ENCODE measurements at regions of chr3 and their contacts with region 1.

Region 1: DNA sequence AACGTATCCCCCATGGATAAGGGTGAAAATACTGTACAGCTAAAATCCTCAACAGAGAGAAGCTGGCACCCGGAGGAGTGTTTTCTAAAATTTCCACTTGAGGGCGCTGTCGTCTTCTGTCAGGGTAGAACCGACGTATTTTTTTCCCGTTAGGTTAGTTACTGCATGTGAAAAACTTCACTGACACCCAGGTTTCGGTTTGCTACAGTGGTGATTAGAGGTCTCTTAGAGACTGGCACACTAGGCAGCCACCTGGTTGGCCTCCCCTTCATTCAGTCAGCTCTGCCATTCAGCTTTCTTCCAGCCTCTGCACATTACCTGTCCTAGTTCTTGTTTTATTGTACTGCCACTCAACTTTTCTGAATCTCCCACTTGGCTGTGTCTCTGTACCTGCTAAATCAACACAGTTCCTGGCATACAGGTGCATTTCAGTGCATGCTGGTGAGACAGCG is 18.4 kb downstream of the CCK start:
- DNase-seq: peak; percentile 56
- CTCF ChIP-seq: peak; percentile 63

Region 2: DNA sequence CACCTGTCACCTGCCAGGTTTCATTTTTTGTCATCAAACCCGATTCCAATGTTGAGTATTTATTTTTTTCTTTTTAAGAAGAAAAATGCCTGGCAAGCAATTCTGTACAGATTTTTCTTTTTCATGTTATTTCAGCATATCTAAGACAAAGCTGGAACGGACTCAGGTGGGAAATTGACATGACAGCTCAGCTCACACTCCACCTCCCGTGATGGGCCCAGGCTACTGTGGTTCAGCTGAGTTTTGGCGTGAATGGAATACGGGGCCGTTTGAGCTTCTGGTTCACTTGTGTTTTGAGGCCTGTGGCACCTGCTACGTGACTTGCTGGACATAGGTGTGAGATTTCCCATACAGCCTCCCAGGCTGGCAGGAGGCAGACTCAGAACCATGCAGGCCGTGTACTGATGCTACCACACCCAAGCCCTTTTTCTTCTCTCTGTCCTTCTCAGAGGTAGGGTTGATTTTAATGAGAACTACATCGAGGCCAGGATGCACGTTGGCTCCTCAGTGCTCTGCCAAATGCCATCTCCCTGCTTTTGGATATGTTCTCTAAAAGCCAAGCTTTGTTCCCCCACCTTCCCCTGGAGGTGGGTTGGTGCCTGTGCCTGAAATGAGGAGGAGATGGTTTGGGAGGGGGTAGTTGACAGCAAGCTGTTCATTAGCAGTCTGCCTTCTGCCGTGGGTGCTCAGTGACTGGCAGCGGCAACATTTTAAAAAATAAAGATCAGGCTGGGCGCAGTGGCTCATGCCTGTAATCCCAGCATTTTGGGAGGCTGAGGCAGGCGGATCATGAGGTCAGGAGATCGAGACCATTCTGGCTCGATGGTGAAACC is 107.8 kb before region 1 on chr3:
- CTCF ChIA-PET with region 1: no interaction called
- POLR2A ChIA-PET with region 1: no interaction called
- DNase-seq: no peak
- CTCF ChIP-seq: no peak

Region 3: DNA sequence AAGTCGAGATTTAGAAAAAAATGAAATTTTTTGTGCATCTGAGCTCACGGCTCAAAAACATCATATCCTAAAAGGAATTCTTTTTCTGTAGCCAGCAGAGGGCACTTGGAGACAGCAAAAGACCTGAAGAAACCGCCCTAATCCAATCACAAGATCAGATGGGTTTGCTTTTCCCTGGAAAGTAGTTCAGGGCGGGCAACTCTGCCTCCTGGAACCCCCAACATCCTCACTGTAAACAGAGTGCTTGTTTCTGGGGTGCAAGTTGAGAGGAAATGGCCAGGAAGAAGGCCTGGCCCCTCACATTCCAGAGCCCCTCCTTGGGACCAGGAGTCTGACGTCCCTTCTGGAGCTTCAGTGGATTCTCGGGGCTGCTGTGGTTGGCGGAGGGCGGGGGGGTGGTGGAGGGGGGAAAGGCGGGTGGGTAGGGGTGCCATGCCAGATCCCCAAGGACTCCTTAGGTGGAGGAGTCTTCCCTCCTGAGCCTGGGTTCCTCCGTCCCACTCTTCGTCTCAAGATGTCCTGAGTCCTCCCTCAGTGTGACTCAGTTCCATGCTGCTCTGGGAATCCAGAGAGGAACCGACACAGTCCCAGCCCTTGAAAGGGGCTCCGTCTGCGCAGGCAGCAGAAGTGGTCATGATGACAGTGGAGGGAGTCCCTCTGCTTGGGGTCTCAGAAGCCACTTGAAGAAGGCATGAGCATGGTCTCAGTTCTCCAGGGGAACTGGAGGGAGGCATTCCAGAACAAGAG is 17.5 kb before region 1 on chr3:
- CTCF ChIA-PET with region 1: interaction called, 15 read pairs
- POLR2A ChIA-PET with region 1: no interaction called
- DNase-seq: no peak
- CTCF ChIP-seq: peak; percentile 21

Region 4: DNA sequence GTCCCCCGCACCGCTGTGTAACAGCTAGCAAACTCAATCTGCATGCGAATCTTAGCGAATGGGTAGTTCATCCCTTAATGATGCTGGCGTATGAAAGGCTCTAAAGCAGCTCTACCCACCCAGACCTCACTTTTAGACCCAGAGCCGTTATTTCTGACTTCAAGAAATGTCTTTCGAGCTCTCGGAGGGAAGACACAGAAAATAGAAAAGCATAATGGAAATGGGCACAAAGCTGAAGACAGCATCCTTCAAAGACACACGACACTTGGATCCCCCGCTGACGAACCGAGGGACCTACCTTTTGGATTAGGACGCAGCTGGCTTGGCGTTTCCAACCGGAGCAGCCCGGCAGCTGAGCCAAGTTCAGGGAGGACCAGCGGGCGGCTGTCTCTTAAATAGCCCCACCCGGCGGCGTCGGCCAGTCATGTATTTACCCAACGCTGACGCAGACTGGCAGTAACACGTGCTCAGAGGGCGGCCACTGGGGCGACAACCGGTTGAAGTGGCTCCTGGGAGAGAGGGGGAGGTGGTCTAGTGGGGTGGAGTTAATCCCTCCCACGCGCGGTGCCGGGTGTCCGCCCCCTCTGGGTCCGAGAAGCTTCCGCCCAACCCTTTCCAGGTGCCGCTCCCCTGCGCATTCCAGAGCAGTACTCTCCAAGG is 16.9 kb after region 1 on chr3:
- CTCF ChIA-PET with region 1: interaction called, 35 read pairs
- POLR2A ChIA-PET with region 1: no interaction called
- DNase-seq: no peak
- CTCF ChIP-seq: no peak

Region 5: GRCh38 chr3:42434777-42435380 is 187.3 kb after region 1 on chr3:
- CTCF ChIA-PET with region 1: interaction called, 114 read pairs
- POLR2A ChIA-PET with region 1: no interaction called
- DNase-seq: no peak
- CTCF ChIP-seq: no peak

Region 6: DNA sequence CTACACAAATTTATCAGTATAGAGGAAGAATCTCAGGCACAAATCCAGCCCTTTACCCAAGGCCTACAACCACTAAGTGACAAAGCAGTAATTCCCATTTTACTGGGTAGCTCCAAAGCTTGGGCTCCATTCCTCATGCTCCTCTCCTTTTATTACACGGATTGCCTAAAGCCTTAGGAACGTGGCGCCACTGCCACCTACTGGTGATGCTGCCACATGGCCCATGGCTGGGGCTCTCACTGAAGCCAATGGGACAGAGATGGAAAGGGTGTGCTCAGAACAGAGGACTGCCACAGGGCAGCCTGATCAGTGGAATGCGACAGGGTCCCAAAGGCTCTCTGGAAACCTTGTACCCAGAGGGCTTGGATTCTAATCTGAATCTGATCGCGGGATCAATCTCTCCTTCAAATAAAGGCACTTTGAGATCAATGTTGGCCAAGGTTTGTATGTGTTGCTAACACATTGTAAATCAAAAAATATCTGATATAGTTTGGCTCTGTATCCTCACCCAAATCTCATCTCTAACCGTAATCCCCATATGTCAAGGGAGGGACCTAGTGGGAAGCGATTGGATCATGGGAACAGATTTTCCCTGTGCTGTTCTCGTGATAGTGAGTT is 196.3 kb after region 1 on chr3:
- CTCF ChIA-PET with region 1: interaction called, 114 read pairs
- POLR2A ChIA-PET with region 1: no interaction called
- DNase-seq: peak; percentile 82
- CTCF ChIP-seq: peak; percentile 99

Region 7: GRCh38 chr3:42501681-42502428 is 254.3 kb after region 1 on chr3:
- CTCF ChIA-PET with region 1: no interaction called
- POLR2A ChIA-PET with region 1: no interaction called
- DNase-seq: peak; percentile 72
- CTCF ChIP-seq: peak; percentile 48

Region 8: DNA sequence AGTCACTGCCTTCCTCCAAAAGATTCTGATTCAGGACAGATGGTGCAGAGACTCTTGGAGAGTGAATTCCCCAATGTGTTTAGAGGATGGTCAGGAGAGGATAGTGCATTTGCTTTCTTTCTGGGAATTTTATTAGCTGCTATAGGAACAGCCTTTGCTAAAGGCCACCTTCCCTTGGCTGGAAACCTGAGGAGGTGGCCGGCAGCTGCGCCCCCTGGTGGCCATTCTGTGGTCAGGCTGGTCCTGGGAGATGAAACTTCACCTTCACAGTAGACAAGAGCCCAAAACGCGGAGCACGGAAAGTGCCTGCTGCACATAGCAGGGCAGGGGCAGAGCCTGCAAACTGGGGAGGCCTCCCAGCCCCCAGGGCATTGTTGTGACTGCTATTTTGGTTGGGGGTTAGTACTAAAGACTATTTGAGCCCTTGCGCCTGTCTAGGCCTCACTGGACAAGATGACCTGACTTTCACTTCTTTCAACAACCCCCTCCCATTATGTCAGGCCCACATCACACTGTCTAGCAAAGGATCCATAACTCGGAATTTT is 299.9 kb after region 1 on chr3:
- CTCF ChIA-PET with region 1: interaction called, 32 read pairs
- POLR2A ChIA-PET with region 1: no interaction called
- DNase-seq: peak; percentile 75
- CTCF ChIP-seq: peak; percentile 91